Stomach (tissue), 19 donors: ENCODE measurements at regions of chr22 and their contacts with region 1.

Region 1: DNA sequence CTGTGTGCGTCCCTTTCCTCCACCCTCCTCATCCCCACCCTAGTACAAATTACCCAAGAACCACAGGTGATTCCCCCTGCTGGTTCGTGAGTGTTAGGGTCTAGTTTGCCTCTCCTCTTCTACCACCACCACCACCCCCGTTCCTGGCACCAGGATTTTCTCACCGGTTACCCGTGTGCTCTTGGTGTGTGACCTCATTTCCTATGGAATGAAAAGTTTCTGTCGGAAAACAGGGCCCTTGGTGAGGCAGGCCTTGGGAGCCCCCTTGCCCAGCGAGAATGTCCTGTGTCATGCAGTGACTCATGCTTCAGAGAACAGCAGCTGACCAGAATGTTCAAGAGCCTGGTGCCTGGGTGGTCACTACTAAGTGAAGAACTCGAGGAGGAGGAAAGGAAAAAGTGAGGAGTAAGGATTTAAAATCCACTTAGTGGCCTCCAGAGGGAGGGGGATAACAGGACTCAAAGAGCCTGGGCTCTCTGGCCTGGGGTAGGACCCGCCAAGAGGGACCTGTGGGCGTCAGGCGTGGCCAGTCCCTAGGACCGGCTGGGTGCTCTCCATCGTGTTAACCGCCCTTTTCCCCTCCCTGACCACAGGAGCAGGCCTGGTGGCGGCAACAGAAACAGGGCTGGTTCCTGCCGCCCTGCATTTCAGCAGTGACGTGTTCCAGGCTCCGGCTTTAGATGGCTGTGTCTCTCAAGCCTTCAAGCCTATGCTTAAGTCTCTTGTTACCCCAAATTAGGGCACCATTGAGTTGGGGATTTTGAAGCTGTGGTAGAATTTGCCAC is 30.2 kb downstream of the C22orf31 start:
- DNase-seq: peak; percentile 44 to 88
- H3K4me3 ChIP-seq: peak overlapping the region; percentile 41 to 52 (median 48)
- H3K27ac ChIP-seq: peak overlapping the region; percentile 73 to 95 (median 91)
- H3K4me1 ChIP-seq: peaks cover 36 to 54% (median 50%) of the 10 kb centered on the region in 4 donors
- H3K27me3 ChIP-seq: peaks cover 0 to 20% (median 0%) of the 10 kb centered on the region in 3 donors
- CTCF ChIP-seq: peak in 1 of 7 experiments; percentile 6
- EP300 ChIP-seq: no peak
- POLR2A ChIP-seq: no peak

Region 2: DNA sequence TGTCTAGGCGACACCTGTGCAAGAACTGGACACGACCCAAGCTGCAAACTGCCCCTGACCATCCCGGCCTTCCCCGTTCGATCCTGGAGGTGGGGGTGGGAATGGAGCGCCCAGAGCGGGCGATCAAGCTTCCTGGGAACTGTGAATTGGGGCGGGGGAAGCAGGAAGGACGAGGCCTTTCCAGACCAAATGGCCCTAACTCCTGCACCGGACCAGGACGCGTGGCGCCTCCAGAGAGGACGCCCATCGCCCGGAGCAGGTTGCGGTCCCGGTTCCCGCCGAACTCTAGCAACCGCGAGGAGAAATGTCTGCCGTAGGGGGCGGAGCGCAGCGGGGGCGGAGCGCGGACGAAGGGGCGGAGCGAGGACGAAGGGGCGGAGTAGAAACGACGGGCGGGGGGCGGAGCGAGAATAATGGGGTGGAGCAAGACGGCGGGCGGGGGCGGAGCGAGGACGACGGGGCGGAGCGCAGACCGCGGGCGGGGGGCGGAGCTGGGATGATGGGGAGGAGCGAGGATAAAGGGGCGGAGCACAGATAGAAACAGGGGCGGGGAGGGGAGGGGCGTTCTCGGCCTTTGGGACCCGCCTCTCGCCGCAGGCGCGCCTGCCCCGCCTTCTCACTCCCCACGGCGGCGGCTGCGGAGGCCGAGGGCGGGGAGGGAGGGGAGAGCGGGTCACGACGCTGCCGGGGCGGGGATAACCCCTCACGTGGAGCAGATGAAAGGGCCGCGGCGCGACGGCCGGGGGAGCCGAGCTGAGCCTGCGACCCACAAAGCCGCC is 148.4 kb before region 1 on chr22 and contains the start of gene ZNRF3:
- intact Hi-C with region 1: loop called (anchors 10 kb)
- DNase-seq: peak; percentile 95 to 97
- H3K4me3 ChIP-seq: peak within 1 kb of the TSS; percentile 63 to 83 (median 68)
- H3K27ac ChIP-seq: peak within 1 kb of the TSS; percentile 48 to 93 (median 85)
- H3K4me1 ChIP-seq: peaks cover 26 to 51% (median 43%) of the 10 kb centered on the region in 4 donors
- H3K27me3 ChIP-seq: peaks cover 0 to 11% (median 0%) of the 10 kb centered on the region in 3 donors
- CTCF ChIP-seq: peak in 1 of 7 experiments; percentile 11
- EP300 ChIP-seq: no peak
- POLR2A ChIP-seq: no peak
- total RNA-seq, gene ZNRF3: 1.8 to 52.7 (median 6.4) TPM

Region 3: DNA sequence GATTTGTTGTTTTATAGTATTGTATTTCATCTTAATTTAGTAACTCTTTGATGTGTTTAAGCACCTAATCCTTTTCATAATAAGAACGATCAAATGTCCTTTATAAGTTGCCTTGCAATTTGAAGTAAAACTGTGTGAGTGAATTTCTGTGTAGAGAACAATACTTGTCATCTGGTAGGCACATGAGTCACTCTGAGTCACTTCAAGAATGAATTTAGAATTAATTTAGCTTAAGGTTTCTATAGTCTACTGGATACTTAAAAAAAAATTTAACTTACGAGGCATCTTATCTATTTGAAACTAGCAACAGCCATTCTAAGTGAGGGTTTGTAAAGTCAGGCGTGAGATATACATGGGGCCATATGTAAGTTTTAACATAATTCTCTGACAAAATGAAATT is 54.8 kb before region 1 on chr22:
- intact Hi-C with region 1: loop called (anchors 10 kb)
- DNase-seq: no peak
- H3K4me3 ChIP-seq: no peak overlapping the region
- H3K27ac ChIP-seq: peak overlapping the region in 3 of 5 donors; percentile 57 to 68 (median 60)
- H3K4me1 ChIP-seq: peaks cover 5 to 50% (median 25%) of the 10 kb centered on the region in 4 donors
- H3K27me3 ChIP-seq: no peaks in the 10 kb centered on the region
- CTCF ChIP-seq: no peak
- EP300 ChIP-seq: no peak
- POLR2A ChIP-seq: no peak

Region 4: GRCh38 chr22:29128891-29129807 is 97.7 kb after region 1 on chr22:
- intact Hi-C with region 1: no loop called
- DNase-seq: no peak
- H3K4me3 ChIP-seq: no peak overlapping the region
- H3K27ac ChIP-seq: peak overlapping the region in 2 of 5 donors; percentile 19 to 52
- H3K4me1 ChIP-seq: peaks cover 0 to 14% (median 13%) of the 10 kb centered on the region in 4 donors
- H3K27me3 ChIP-seq: no peaks in the 10 kb centered on the region
- CTCF ChIP-seq: no peak
- EP300 ChIP-seq: no peak
- POLR2A ChIP-seq: no peak